ENCODE measurements at regions of chr17 and their contacts with region 1.

Region 1: GRCh38 chr17:75515496-75516254 is at the start of gene CASKIN2:
- DNase-seq: peak; percentile 97
- total RNA-seq, gene CASKIN2: 48.2 TPM

Region 2: DNA sequence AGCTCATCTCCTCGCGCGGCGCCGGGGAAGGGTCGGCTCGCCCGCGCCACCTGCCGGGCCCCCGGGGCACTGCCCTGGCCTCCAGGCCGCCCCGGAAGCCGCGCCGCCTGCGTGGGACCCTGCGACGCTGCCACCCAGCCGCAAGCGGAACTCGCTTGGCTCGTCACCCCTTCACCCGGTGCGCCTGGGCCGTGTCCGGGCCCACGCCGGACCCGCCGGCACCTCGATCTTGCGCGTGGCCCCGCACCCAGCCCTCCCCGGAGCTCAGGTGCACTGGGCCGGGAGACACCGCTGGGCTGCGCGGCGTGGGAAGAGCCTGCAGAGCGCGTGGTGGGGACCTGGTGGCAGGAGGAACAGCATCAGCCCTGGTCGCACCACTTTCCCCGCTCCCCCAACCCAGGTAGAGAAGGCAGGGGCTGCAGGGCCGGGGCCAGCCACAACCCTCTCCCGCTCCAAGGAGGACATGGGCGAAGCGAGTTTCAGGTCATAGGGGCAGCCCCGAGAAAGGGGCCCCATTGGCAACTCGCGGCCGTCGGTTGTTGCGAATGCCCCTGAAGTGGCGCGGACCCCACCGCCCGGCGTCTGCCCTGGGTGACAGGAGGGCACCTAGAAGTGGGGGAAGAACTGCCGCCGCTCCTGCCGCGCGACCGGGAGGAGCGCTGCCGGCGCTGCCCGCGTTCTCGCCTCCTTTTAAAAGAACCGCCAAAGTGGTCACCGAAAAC is 244.3 kb before region 1 on chr17:
- intact Hi-C with region 1: loop called (anchors 5 kb)
- DNase-seq: peak; percentile 94

Region 3: DNA sequence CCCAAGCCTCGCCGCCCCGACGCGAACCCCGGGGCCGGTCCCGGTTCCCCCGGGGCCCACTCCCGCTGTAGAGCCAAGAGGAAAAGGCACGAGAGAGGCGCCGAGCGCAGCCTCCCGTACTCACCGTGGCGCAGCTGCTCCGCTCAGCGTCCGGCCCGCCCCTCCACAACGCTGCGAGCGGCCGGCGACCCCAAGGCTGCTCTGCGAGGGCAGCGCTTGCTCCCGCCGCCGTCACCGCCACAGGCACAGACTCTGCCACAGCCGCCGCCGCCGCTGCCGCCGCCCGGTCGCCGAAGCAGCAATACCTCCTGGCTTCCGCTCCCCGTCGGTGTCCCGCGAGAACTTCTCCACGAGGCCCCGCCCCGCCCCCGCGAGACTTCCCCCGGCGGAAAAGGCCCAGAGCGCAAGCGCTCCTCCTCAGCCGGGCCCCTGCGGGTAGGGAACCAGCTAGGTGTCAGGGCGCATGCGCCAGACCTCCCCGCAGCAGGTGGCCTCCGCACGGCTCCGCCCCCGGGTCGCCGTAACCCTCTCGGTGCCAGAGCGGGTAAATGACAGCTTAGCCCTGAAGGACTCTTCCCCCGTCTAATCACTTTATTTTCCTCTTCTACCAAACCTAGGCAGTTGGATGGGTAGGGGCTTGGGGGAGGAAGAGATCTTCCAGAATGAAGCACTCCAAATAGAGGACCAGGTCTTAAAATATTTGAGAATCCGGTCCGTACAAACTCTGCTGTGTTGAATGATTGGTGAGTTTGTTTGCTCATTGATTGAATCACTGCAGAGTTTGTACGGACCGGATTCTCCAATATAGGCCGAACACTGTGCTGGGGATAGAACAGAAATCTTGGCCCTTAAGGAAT is 110.1 kb before region 1 on chr17 and contains the start of gene GRB2:
- intact Hi-C with region 1: loop called (anchors 5 kb)
- DNase-seq: peak; percentile 100
- total RNA-seq, gene GRB2: 57.1 TPM

Region 4: GRCh38 chr17:75430159-75430974 is 85.3 kb before region 1 on chr17:
- intact Hi-C with region 1: loop called (anchors 1 kb)
- DNase-seq: no peak

Region 5: DNA sequence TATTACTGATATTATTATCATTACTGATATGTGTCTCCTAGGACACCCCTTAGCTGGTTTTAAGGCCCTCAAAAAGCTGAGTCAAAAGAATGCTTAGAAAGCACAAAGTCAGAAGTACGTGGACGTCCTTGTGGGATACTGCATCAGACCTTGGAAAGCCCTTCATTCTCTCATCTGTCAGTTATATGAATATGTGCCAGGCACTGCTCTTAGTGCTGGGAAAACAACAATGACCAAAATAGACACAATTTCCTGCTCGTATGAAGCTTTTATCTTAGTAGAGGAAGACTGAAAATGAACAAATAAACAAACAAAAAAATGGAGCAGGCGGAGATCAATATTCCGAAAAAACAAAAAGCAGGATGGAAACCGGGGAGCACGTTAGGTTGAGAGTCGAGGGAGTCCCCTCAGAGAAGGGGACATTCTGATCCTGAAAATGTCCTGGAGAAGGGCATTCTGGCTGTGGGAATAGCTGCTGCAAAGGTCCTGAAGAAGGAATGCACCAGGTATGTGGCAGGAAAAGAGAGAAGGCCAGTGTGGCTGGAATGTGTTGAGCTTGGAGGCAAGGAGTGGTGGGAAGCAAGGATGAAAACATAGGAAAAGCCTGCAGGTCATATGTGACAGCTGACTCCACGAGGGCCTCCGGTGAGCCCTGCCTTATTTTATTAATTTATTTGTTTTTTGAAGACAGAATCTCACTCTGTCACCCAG is 74.8 kb before region 1 on chr17:
- intact Hi-C with region 1: loop called (anchors 5 kb)
- DNase-seq: no peak

Region 6: GRCh38 chr17:75589012-75589918 is 73.6 kb after region 1 on chr17:
- intact Hi-C with region 1: loop called (anchors 5 kb)
- DNase-seq: peak; percentile 99